ENCODE measurements at regions of chr3 and their contacts with region 1.

Region 1: GRCh38 chr3:30644593-30645012 is 38.2 kb downstream of the TGFBR2 start:
- DNase-seq: peak; percentile 75
- H3K4me3 Mint-ChIP-seq: peak overlapping the region; percentile 50
- H3K27ac Mint-ChIP-seq: peak overlapping the region; percentile 94
- H3K4me1 Mint-ChIP-seq: peaks cover 92% of the 10 kb centered on the region
- H3K27me3 Mint-ChIP-seq: no peaks in the 10 kb centered on the region

Region 2: DNA sequence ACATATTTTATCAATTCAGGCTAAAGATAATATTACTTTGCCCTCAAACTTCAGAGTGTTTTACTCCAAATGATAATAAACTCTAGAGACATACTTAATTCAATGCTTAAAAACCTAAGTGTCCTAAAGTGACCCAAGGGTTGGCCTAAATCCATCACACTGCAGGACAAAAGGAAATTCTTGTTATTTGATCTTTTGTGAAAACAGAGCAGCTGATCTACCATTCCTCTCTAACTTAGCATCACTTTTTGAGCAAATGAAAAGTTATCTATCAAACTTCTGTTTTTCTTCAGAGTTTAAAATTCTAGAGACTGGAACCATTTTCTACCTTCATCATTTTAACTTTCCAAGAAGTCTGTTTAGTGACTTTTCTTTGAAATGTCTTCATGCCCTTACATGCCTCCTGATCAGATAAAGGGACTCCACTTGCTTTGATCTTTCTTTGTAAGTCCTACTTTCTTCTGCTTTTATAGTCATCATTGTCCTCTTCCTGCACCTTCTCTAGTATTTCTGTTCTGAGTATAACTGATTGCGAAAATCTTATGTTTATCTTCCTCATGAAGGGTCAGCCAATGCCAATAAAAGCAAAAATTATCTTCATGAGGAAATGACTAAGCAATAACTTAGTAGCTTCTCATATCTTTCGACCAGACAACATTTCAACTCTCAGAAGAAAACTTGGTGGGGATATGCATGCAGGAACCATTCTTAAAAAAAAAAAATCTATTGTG is 416.9 kb before region 1 on chr3:
- CTCF ChIA-PET with region 1: no interaction called
- POLR2A ChIA-PET with region 1: no interaction called
- intact Hi-C with region 1: no loop called
- DNase-seq: no peak
- H3K4me3 Mint-ChIP-seq: no peak overlapping the region
- H3K27ac Mint-ChIP-seq: no peak overlapping the region
- H3K4me1 Mint-ChIP-seq: peaks cover 11% of the 10 kb centered on the region
- H3K27me3 Mint-ChIP-seq: no peaks in the 10 kb centered on the region

Region 3: DNA sequence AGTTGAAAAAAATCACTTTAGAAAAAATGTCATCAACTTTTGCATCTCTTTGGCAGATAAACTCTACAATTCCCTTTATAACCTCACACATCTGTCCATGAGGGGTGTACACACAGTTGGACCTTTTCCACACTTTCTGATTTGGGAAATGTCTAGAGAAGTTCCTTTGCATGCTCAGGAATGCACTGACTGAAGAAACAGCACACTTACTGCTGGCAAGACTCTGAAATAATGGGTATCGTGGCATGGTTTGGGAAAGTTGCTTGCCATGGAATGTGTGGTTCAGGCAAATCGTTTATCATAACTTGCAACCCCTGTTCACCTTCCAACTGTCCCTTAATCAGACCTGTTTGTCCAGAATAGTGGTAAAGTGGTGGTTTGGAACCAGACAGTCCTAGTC is 173.5 kb before region 1 on chr3:
- CTCF ChIA-PET with region 1: no interaction called
- POLR2A ChIA-PET with region 1: no interaction called
- intact Hi-C with region 1: no loop called
- DNase-seq: no peak
- H3K4me3 Mint-ChIP-seq: no peak overlapping the region
- H3K27ac Mint-ChIP-seq: no peak overlapping the region
- H3K4me1 Mint-ChIP-seq: peaks cover 17% of the 10 kb centered on the region
- H3K27me3 Mint-ChIP-seq: no peaks in the 10 kb centered on the region

Region 4: DNA sequence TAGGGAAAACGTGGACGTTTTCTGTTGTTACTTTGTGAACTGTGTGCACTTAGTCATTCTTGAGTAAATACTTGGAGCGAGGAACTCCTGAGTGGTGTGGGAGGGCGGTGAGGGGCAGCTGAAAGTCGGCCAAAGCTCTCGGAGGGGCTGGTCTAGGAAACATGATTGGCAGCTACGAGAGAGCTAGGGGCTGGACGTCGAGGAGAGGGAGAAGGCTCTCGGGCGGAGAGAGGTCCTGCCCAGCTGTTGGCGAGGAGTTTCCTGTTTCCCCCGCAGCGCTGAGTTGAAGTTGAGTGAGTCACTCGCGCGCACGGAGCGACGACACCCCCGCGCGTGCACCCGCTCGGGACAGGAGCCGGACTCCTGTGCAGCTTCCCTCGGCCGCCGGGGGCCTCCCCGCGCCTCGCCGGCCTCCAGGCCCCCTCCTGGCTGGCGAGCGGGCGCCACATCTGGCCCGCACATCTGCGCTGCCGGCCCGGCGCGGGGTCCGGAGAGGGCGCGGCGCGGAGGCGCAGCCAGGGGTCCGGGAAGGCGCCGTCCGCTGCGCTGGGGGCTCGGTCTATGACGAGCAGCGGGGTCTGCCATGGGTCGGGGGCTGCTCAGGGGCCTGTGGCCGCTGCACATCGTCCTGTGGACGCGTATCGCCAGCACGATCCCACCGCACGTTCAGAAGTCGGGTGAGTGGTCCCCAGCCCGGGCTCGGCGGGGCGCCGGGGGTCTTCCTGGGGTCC is 38.1 kb before region 1 on chr3 and contains the start of gene TGFBR2:
- CTCF ChIA-PET with region 1: interaction called, 5 read pairs
- POLR2A ChIA-PET with region 1: interaction called, 16 read pairs
- intact Hi-C with region 1: loop called (anchors 1 kb)
- DNase-seq: peak; percentile 92
- H3K4me3 Mint-ChIP-seq: peak within 1 kb of the TSS; percentile 87
- H3K27ac Mint-ChIP-seq: peak within 1 kb of the TSS; percentile 96
- H3K4me1 Mint-ChIP-seq: peaks cover 53% of the 10 kb centered on the region
- H3K27me3 Mint-ChIP-seq: no peaks in the 10 kb centered on the region
- total RNA-seq, gene TGFBR2: 36.8 to 37.0 TPM

Region 5: DNA sequence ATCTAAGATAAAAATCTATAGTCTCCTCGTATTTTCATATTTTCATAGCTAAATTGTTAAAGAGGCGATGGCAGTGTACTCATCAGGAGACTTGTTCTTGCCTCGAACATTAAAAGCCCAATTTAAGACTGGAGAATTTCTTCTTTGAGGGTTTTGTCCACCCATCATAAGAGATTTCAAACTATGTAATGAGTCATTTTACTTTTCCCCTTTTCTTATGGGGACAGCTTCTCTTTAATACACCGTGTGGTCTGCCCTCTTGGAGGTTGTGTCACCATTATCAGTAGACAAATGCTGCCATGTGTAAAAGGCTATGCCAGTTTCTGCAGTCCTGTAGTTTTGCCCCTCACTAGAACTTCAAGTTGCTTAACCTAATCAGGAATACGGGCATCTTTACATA is 21.3 kb before region 1 on chr3:
- CTCF ChIA-PET with region 1: interaction called, 5 read pairs
- POLR2A ChIA-PET with region 1: interaction called, 23 read pairs
- intact Hi-C with region 1: loop called (anchors 1 kb)
- DNase-seq: no peak
- H3K4me3 Mint-ChIP-seq: peak overlapping the region; percentile 59
- H3K27ac Mint-ChIP-seq: peak overlapping the region; percentile 96
- H3K4me1 Mint-ChIP-seq: peaks cover 91% of the 10 kb centered on the region
- H3K27me3 Mint-ChIP-seq: no peaks in the 10 kb centered on the region

Region 6: GRCh38 chr3:30628901-30629590 is 15.6 kb before region 1 on chr3:
- CTCF ChIA-PET with region 1: interaction called, 5 read pairs
- POLR2A ChIA-PET with region 1: interaction called, 9 read pairs
- intact Hi-C with region 1: loop called (anchors 1 kb)
- DNase-seq: no peak
- H3K4me3 Mint-ChIP-seq: peak overlapping the region; percentile 45
- H3K27ac Mint-ChIP-seq: peak overlapping the region; percentile 91
- H3K4me1 Mint-ChIP-seq: peaks cover 90% of the 10 kb centered on the region
- H3K27me3 Mint-ChIP-seq: no peaks in the 10 kb centered on the region

Region 7: DNA sequence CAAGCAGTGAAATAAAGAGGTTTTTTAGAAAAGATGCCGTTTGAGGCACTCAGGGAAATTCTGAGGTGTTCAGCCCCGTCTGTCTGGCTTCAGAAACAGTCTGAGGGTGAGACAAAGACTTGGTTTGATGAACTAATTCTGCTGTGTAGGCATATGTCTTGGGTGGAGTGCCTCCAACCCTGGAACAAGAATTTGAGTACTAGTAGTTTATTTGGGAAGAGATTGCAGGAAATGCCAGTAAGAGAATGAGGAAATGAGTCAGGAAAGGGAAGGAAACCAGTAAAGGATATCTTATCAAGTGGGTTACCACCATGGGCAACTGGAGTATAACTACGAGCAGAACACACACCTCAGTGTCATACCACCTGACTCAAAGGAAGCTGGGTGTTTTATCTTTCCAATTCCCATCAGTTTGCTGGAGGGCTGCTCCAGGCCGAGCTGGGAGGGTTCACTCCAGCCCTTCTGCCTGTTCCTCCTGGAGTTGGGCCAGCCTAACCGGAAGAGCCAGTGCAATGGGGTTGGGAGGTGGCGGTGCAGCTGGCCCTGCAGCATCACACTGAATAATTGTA is 37.1 kb after region 1 on chr3:
- CTCF ChIA-PET with region 1: no interaction called
- POLR2A ChIA-PET with region 1: no interaction called
- intact Hi-C with region 1: loop called (anchors 1 kb)
- DNase-seq: no peak
- H3K4me3 Mint-ChIP-seq: no peak overlapping the region
- H3K27ac Mint-ChIP-seq: peak overlapping the region; percentile 65
- H3K4me1 Mint-ChIP-seq: peaks cover 86% of the 10 kb centered on the region
- H3K27me3 Mint-ChIP-seq: no peaks in the 10 kb centered on the region

Region 8: GRCh38 chr3:31219131-31219843 is 574.7 kb after region 1 on chr3:
- CTCF ChIA-PET with region 1: no interaction called
- POLR2A ChIA-PET with region 1: no interaction called
- intact Hi-C with region 1: loop called (anchors 10 kb)
- DNase-seq: no peak
- H3K4me3 Mint-ChIP-seq: no peak overlapping the region
- H3K27ac Mint-ChIP-seq: peak overlapping the region; percentile 2
- H3K4me1 Mint-ChIP-seq: peaks cover 92% of the 10 kb centered on the region
- H3K27me3 Mint-ChIP-seq: no peaks in the 10 kb centered on the region

Measured in activated CD4-positive, alpha-beta memory T cell treated with anti-CD3 and anti-CD28 coated beads for 36 hours (primary cell).